ENCODE measurements at regions of chr14 and their contacts with region 1.

Region 1: GRCh38 chr14:37565550-37565949 is 29.5 kb downstream of the FOXA1 start:
- DNase-seq: peak; percentile 57
- H3K4me3 Mint-ChIP-seq: peak overlapping the region; percentile 64
- H3K27ac Mint-ChIP-seq: peak overlapping the region; percentile 96
- H3K4me1 Mint-ChIP-seq: peaks cover 35% of the 10 kb centered on the region
- H3K27me3 Mint-ChIP-seq: no peaks in the 10 kb centered on the region
- CTCF ChIP-seq: peak; percentile 48

Region 2: GRCh38 chr14:37253905-37254304 is 311.6 kb before region 1 on chr14:
- CTCF ChIA-PET with region 1: interaction called, 3 read pairs
- intact Hi-C with region 1: loop called (anchors 1 kb)
- DNase-seq: peak; percentile 55
- H3K4me3 Mint-ChIP-seq: no peak overlapping the region
- H3K27ac Mint-ChIP-seq: no peak overlapping the region
- H3K4me1 Mint-ChIP-seq: peaks cover 15% of the 10 kb centered on the region
- H3K27me3 Mint-ChIP-seq: no peaks in the 10 kb centered on the region
- CTCF ChIP-seq: no peak

Region 3: GRCh38 chr14:37363661-37364060 is 201.9 kb before region 1 on chr14:
- CTCF ChIA-PET with region 1: no interaction called
- intact Hi-C with region 1: no loop called
- DNase-seq: no peak
- H3K4me3 Mint-ChIP-seq: no peak overlapping the region
- H3K27ac Mint-ChIP-seq: no peak overlapping the region
- H3K4me1 Mint-ChIP-seq: no peaks in the 10 kb centered on the region
- H3K27me3 Mint-ChIP-seq: no peaks in the 10 kb centered on the region
- CTCF ChIP-seq: no peak

Region 4: GRCh38 chr14:37422319-37422718 is 143.2 kb before region 1 on chr14:
- CTCF ChIA-PET with region 1: no interaction called
- intact Hi-C with region 1: loop called (anchors 1 kb)
- DNase-seq: no peak
- H3K4me3 Mint-ChIP-seq: no peak overlapping the region
- H3K27ac Mint-ChIP-seq: peak overlapping the region; percentile 23
- H3K4me1 Mint-ChIP-seq: peaks cover 15% of the 10 kb centered on the region
- H3K27me3 Mint-ChIP-seq: no peaks in the 10 kb centered on the region
- CTCF ChIP-seq: no peak

Region 5: DNA sequence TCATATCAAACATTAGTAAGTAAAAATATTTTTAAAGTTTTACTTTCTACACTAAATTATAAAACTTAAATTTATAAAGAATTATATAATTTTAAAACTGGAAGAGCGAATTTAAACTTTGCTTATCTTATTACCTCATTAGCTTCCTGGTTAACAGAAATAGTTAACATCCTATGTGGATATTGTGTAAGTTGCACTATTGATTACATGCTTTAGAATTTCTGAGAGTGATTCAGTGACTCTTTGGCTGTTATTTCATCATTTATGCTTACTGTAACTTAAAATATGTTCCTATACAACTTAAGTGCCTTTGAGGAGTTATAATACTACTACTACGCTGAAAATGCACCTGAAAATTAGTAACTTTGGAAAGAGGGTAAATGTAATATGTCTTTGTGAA is 71.9 kb before region 1 on chr14:
- CTCF ChIA-PET with region 1: no interaction called
- intact Hi-C with region 1: loop called (anchors 5 kb)
- DNase-seq: no peak
- H3K4me3 Mint-ChIP-seq: no peak overlapping the region
- H3K27ac Mint-ChIP-seq: peak overlapping the region; percentile 89
- H3K4me1 Mint-ChIP-seq: peaks cover 30% of the 10 kb centered on the region
- H3K27me3 Mint-ChIP-seq: no peaks in the 10 kb centered on the region
- CTCF ChIP-seq: no peak

Region 6: GRCh38 chr14:37508500-37508899 is 57.0 kb before region 1 on chr14:
- CTCF ChIA-PET with region 1: no interaction called
- intact Hi-C with region 1: no loop called
- DNase-seq: no peak
- H3K4me3 Mint-ChIP-seq: no peak overlapping the region
- H3K27ac Mint-ChIP-seq: no peak overlapping the region
- H3K4me1 Mint-ChIP-seq: no peaks in the 10 kb centered on the region
- H3K27me3 Mint-ChIP-seq: no peaks in the 10 kb centered on the region
- CTCF ChIP-seq: no peak

Region 7: DNA sequence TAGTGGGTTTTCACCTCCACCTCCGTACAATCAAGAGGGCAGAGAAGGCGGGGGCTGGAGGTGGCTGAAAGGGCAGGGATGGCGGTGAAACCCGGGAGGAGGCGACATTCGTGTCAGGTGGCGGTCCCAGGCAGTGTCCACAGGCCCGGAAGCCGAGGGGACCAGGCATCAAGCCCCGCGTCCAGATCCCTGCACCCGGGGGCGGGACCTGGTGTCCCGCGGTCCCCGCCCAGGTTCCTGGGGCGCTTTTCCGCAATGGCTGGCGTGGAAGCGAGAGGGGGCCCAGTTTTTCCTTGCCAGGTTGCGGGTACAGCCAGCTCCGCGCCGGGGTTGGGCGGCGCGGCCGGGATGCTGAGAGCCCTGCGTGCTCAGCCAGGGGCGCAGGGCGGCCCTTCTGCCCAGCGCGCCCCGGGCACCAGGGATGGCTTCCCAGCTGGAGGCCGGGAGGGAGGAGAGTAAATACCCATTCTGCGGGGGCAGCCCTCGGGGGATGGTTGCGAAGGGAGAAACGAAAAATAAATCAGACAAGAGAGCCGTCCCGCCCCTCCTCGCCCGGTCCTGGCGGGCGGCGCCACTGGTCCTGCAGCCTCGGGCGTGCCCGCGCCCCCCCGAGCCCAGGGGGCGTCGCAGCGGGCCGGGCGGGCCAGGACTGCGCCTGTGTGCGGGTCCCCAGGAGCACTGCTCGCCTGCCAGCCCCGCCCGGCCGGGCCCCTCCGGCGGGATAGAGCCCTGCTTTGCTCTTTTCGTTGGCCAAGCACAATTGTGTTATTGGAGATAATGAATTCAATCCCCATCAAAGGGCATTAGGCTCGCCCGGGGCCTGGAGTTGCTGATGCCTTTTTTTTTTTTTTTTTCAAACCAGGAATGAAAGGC is 18.0 kb after region 1 on chr14:
- CTCF ChIA-PET with region 1: interaction called, 3 read pairs
- intact Hi-C with region 1: loop called (anchors 1 kb)
- DNase-seq: peak; percentile 79
- H3K4me3 Mint-ChIP-seq: peak overlapping the region; percentile 86
- H3K27ac Mint-ChIP-seq: peak overlapping the region; percentile 85
- H3K4me1 Mint-ChIP-seq: peaks cover 35% of the 10 kb centered on the region
- H3K27me3 Mint-ChIP-seq: no peaks in the 10 kb centered on the region
- CTCF ChIP-seq: no peak

Measured in Calu3 (cell line).